Right ventricle myocardium inferior (tissue), 1 donor: ENCODE measurements at regions of chr1 and their contacts with region 1.

Region 1: GRCh38 chr1:150561974-150562445 is 12.8 kb downstream of the ADAMTSL4 start:
- DNase-seq: peak; percentile 97
- ATAC-seq: peak; percentile 87

Region 2: GRCh38 chr1:150613061-150613920 is 51.3 kb after region 1 on chr1:
- intact Hi-C with region 1: loop called (anchors 2 kb)
- DNase-seq: no peak
- ATAC-seq: peak; percentile 56

Region 3: DNA sequence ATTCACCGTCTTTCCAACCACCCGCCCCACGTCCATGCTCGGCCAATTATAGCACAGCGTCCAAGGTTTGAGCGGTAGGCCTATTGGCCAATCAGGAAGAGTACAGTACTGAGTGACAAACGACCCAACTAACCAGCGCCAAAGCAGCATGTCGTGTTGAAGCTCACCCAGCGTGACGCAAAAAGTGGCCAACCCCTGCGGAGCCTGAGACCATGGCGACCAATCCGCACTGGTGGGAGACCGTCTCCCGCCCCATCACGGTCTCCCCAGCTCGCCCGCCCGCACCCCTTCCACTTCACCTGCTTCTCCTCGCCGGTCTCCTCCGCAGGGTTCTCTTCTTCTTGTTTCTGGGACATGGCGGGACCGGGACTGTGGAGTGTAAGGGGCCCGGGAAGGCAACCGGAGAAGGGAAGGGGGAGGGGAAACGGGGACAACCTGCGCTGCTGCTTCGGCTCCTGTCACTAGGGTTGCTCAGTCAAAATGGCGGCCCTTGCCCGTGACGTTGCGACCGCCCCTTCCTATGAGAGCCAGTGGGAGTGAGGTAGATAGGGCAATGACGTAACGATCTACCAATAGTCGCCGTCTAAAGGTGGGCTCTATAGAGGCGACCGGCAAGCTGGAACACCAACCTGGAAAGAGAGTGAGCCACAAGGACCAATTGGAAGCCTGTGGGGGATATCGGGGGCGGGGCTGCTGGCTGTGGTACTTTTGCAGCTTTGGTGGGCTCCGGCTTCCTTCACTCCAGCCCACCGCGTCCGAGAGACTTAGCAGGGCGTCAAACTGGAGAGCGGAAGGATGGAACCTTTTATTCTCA is 67.3 kb after region 1 on chr1 and contains the start of gene ENSA:
- intact Hi-C with region 1: loop called (anchors 2 kb)
- DNase-seq: peak; percentile 99
- ATAC-seq: peak; percentile 97
- total RNA-seq, gene ENSA: 131 TPM

Region 4: GRCh38 chr1:150813058-150813707 is 251.2 kb after region 1 on chr1:
- intact Hi-C with region 1: loop called (anchors 10 kb)
- DNase-seq: peak; percentile 77
- ATAC-seq: peak; percentile 74